ENCODE measurements at regions of chr1 and their contacts with region 1.

Region 1: DNA sequence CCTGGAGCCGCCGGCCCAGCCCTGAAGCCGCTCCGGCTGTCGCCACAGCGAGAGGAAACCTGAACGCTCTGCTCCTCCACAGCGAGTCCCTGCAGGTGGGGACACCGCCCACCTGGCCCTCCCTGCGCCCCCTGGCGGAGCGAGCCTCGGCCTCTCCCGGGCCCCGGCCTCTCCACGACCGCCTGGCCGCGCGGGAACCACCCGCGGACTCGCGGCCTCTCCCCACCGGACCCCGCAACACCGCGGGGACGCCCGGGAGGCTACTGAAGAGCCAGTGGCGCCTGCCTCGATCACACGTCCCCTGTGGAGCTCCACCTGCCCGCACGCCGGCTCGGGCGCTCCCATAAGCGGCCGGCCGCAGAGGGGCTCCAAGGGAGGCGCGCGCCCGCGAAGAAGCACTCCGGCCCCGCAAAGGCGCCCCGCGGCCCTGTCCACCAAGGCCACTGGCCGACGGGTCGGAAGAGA is 109.6 kb downstream of the KCNN3 start:
- DNase-seq: peak; percentile 85
- ATAC-seq: peak; percentile 61
- H3K4me3 Mint-ChIP-seq: peak overlapping the region; percentile 64
- H3K27ac Mint-ChIP-seq: peak overlapping the region; percentile 96
- H3K4me1 Mint-ChIP-seq: peaks cover 55% of the 10 kb centered on the region
- H3K27me3 Mint-ChIP-seq: no peaks in the 10 kb centered on the region
- CTCF ChIP-seq: peak; percentile 93

Region 2: DNA sequence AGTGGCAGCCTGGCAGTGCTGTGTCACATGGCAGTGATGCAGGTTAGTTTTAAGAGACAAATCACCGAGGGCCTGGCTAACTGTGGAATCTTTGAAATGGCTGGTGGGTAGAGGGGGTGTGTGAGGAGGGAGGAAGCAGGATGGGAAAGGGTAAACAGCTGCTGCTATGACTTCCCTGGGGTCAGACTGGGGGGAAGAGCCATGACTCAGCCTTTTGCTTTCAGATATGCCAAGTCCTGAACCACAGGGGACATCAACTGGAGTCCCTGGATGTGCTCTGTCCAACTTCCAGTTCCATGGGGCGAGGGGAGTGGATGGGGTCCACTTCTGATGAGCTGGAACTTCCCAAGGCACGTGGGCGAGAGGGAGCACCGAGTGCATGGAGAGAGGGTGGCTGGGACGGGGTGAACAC is 31.5 kb before region 1 on chr1:
- CTCF ChIA-PET with region 1: interaction called, 12 read pairs
- POLR2A ChIA-PET with region 1: interaction called, 4 read pairs
- intact Hi-C with region 1: no loop called
- DNase-seq: peak; percentile 22
- ATAC-seq: peak; percentile 36
- H3K4me3 Mint-ChIP-seq: no peak overlapping the region
- H3K27ac Mint-ChIP-seq: no peak overlapping the region
- H3K4me1 Mint-ChIP-seq: peaks cover 30% of the 10 kb centered on the region
- H3K27me3 Mint-ChIP-seq: peaks cover 1% of the 10 kb centered on the region
- CTCF ChIP-seq: no peak

Region 3: DNA sequence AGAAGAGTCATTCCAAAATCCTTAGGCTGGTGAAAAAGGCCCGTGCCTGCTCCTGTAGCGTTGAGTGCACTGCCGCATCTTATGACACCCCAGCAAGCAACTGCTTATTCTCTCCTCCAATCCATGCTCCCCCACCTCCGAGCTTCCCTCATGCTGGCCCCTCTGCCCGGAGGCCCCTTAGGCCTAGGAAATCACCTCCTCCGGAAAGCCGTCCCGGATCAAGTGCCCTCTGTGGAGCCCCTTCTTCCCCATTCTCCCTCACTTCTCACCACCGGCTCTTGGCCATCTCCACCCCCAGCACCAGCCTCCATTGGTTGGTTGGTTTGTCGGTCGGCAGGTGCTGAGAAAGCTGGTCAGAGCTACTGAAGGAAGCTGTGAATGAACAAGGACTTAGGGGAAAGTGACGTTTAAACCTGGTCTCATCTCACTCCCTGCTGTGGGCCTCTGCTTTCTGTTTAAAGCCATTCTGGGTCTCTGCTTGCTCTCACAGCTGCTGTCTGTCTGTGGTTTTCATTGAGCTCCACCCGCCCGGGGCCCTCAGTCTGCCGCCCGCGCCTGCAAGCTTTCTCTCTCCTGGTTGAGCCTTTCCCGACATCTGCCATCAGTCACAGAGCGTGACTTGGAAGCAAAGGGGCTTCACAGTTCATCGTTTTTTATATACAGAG is 12.6 kb before region 1 on chr1:
- CTCF ChIA-PET with region 1: interaction called, 72 read pairs
- POLR2A ChIA-PET with region 1: interaction called, 38 read pairs
- intact Hi-C with region 1: no loop called
- DNase-seq: peak; percentile 78
- ATAC-seq: peak; percentile 84
- H3K4me3 Mint-ChIP-seq: peak overlapping the region; percentile 68
- H3K27ac Mint-ChIP-seq: peak overlapping the region; percentile 90
- H3K4me1 Mint-ChIP-seq: peaks cover 68% of the 10 kb centered on the region
- H3K27me3 Mint-ChIP-seq: no peaks in the 10 kb centered on the region
- CTCF ChIP-seq: no peak

Region 4: GRCh38 chr1:154791292-154792166 is 31.0 kb after region 1 on chr1:
- CTCF ChIA-PET with region 1: interaction called, 15 read pairs
- POLR2A ChIA-PET with region 1: interaction called, 3 read pairs
- intact Hi-C with region 1: loop called (anchors 5 kb)
- DNase-seq: peak; percentile 95
- ATAC-seq: peak; percentile 92
- H3K4me3 Mint-ChIP-seq: peak overlapping the region; percentile 57
- H3K27ac Mint-ChIP-seq: peak overlapping the region; percentile 87
- H3K4me1 Mint-ChIP-seq: peaks cover 31% of the 10 kb centered on the region
- H3K27me3 Mint-ChIP-seq: no peaks in the 10 kb centered on the region
- CTCF ChIP-seq: no peak

Measured in activated CD8-positive, alpha-beta T cell treated with anti-CD3 and anti-CD28 coated beads for 36 hours (primary cell).